PC-9 (cell line): ENCODE measurements at regions of chr15 and their contacts with region 1.

Region 1: GRCh38 chr15:81000624-81001151 is at the start of gene TLNRD1:
- DNase-seq: peak; percentile 75 to 86
- H3K4me3 ChIP-seq: peak within 1 kb of the TSS; percentile 76
- H3K27ac ChIP-seq: peak within 1 kb of the TSS; percentile 83
- H3K4me1 ChIP-seq: peaks cover 18% of the 10 kb centered on the region
- H3K27me3 ChIP-seq: no peaks in the 10 kb centered on the region
- CTCF ChIP-seq: no peak
- total RNA-seq, gene TLNRD1: 14.9 and 18.2 TPM in 2 replicates

Region 2: DNA sequence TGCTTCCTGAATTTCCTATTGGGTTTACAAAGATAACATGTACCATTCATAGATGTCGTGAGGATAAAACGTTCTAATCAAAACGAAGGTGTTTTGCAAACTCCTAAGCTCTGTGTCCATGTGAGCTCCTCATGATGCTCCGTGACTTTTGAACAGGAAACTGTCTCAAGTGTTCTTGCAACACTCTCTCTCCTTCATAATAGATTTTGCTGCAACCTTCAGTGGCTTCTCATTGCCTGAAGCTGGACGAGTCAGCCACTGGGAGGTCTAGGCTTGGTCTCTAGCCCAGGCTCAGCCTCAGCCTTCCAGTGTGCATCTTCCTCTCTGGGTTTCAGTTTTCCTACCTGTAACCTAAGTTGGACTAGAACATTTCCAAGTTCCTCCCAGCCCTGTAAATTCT is 1011.0 kb before region 1 on chr15:
- CTCF ChIA-PET with region 1: interaction called, 12 read pairs
- POLR2A ChIA-PET with region 1: no interaction called
- intact Hi-C with region 1: no loop called
- DNase-seq: peak in 1 of 2 experiments; percentile 48
- H3K4me3 ChIP-seq: no peak overlapping the region
- H3K27ac ChIP-seq: no peak overlapping the region
- H3K4me1 ChIP-seq: peaks cover 20% of the 10 kb centered on the region
- H3K27me3 ChIP-seq: no peaks in the 10 kb centered on the region
- CTCF ChIP-seq: no peak

Region 3: GRCh38 chr15:80323285-80323684 is 677.4 kb before region 1 on chr15:
- CTCF ChIA-PET with region 1: no interaction called
- POLR2A ChIA-PET with region 1: no interaction called
- intact Hi-C with region 1: no loop called
- DNase-seq: no peak
- H3K4me3 ChIP-seq: no peak overlapping the region
- H3K27ac ChIP-seq: no peak overlapping the region
- H3K4me1 ChIP-seq: no peaks in the 10 kb centered on the region
- H3K27me3 ChIP-seq: no peaks in the 10 kb centered on the region
- CTCF ChIP-seq: peak; percentile 63

Region 4: DNA sequence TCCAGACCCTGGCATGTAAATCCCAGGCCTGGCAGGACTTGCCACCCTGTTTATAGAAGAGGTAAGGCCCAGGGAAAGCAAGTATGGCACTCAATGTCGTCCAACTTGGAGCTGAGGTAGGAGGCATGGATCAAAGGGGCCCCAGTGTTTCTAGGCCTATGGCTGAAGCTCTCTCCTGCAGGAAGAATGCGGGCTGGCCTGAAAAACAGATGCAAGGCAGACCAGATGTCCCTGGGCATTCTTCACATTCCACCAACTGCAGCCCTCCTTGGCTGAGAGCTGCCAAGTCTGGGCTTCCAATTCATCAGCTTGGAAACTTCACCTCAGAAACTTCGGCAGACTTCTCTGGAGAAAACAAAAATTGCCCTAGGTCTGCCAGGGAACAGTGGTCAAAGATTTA is 33.2 kb before region 1 on chr15:
- CTCF ChIA-PET with region 1: no interaction called
- POLR2A ChIA-PET with region 1: no interaction called
- intact Hi-C with region 1: no loop called
- DNase-seq: peak; percentile 71 to 73
- H3K4me3 ChIP-seq: no peak overlapping the region
- H3K27ac ChIP-seq: no peak overlapping the region
- H3K4me1 ChIP-seq: peaks cover 32% of the 10 kb centered on the region
- H3K27me3 ChIP-seq: no peaks in the 10 kb centered on the region
- CTCF ChIP-seq: no peak

Region 5: GRCh38 chr15:80989518-80990478 is 10.9 kb before region 1 on chr15 and contains the start of gene MESD:
- CTCF ChIA-PET with region 1: no interaction called
- POLR2A ChIA-PET with region 1: no interaction called
- intact Hi-C with region 1: loop called (anchors 1 kb)
- DNase-seq: peak; percentile 74 to 92
- H3K4me3 ChIP-seq: peak within 1 kb of the TSS; percentile 87
- H3K27ac ChIP-seq: peak within 1 kb of the TSS; percentile 58
- H3K4me1 ChIP-seq: peaks cover 24% of the 10 kb centered on the region
- H3K27me3 ChIP-seq: no peaks in the 10 kb centered on the region
- CTCF ChIP-seq: no peak
- total RNA-seq, gene MESD: 21.9 and 22.8 TPM in 2 replicates

Region 6: GRCh38 chr15:81015621-81016488 is 15.2 kb after region 1 on chr15:
- CTCF ChIA-PET with region 1: no interaction called
- POLR2A ChIA-PET with region 1: no interaction called
- intact Hi-C with region 1: no loop called
- DNase-seq: no peak
- H3K4me3 ChIP-seq: no peak overlapping the region
- H3K27ac ChIP-seq: no peak overlapping the region
- H3K4me1 ChIP-seq: no peaks in the 10 kb centered on the region
- H3K27me3 ChIP-seq: no peaks in the 10 kb centered on the region
- CTCF ChIP-seq: no peak

Region 7: DNA sequence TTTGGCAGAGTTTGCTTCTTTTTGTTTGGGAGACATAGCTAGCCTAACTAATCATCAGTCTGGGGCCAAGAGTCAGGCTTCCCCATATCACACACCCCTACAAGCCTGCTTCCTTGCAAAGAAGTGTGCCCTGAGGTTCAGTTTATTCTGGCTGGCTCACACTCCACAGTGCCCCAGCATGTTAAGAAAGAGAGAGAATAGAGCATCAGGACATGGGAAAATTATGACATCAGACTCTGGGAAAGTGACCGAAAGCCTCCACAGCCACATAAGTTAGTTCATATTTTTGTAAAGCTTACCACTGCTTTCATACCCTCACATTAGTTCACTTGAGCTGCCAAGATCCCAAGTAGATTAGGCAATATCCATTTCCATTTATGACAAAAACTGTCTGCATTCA is 70.4 kb after region 1 on chr15:
- CTCF ChIA-PET with region 1: no interaction called
- POLR2A ChIA-PET with region 1: no interaction called
- intact Hi-C with region 1: no loop called
- DNase-seq: no peak
- H3K4me3 ChIP-seq: no peak overlapping the region
- H3K27ac ChIP-seq: no peak overlapping the region
- H3K4me1 ChIP-seq: peaks cover 10% of the 10 kb centered on the region
- H3K27me3 ChIP-seq: no peaks in the 10 kb centered on the region
- CTCF ChIP-seq: no peak

Region 8: GRCh38 chr15:81106560-81106959 is 105.9 kb after region 1 on chr15:
- CTCF ChIA-PET with region 1: no interaction called
- POLR2A ChIA-PET with region 1: no interaction called
- intact Hi-C with region 1: loop called (anchors 5 kb)
- DNase-seq: peak; percentile 48
- H3K4me3 ChIP-seq: no peak overlapping the region
- H3K27ac ChIP-seq: no peak overlapping the region
- H3K4me1 ChIP-seq: no peaks in the 10 kb centered on the region
- H3K27me3 ChIP-seq: peaks cover 17% of the 10 kb centered on the region; the same call in 1 of the 2 replicates
- CTCF ChIP-seq: peak; percentile 78

Region 9: DNA sequence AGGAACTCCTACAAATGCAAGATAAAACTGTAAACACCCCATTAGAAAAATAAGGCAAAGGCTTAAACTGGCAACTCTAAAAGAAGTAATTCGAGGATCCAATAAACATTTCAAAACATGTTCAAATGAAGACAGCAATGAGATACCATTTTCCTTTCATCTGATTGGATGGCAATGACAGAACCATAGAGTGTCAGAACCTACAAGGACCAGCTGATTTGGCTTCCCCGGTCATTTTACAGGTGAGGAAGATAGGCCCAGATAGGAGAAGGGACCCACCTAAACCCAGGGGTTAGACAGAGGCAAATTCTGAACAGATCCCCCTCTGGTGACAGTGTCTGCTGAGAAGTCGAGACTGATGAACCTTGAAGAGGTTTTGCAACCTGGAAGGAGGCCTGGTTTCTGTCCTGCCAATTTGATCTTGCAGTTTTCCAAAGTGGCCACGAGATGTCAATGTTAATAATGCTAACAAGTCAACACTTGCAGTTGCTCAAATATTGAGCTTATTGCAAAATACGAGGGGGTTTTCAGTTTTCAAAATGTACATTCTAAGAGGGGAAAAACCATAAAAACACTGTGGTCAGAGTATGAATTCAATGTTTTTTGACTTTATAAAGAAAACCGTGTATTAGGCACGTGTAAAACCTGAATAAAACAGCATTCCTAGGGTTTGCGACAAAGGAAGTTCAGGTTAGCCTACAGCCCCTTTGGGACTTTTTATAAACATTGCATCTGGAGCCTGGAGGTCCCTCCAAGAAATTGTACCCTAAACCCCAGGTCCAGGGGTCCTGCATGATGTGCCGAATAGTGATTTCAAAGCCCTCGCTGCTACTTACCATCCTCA is 154.9 kb after region 1 on chr15:
- CTCF ChIA-PET with region 1: interaction called, 17 read pairs
- POLR2A ChIA-PET with region 1: no interaction called
- intact Hi-C with region 1: no loop called
- DNase-seq: no peak
- H3K4me3 ChIP-seq: no peak overlapping the region
- H3K27ac ChIP-seq: no peak overlapping the region
- H3K4me1 ChIP-seq: no peaks in the 10 kb centered on the region
- H3K27me3 ChIP-seq: peaks cover 25% of the 10 kb centered on the region
- CTCF ChIP-seq: peak; percentile 60

Region 10: GRCh38 chr15:81265944-81266775 is 265.5 kb after region 1 on chr15:
- CTCF ChIA-PET with region 1: no interaction called
- POLR2A ChIA-PET with region 1: no interaction called
- intact Hi-C with region 1: loop called (anchors 5 kb)
- DNase-seq: peak; percentile 52 to 59
- H3K4me3 ChIP-seq: no peak overlapping the region
- H3K27ac ChIP-seq: no peak overlapping the region
- H3K4me1 ChIP-seq: no peaks in the 10 kb centered on the region
- H3K27me3 ChIP-seq: peaks cover 68% of the 10 kb centered on the region
- CTCF ChIP-seq: peak; percentile 81

Region 11: DNA sequence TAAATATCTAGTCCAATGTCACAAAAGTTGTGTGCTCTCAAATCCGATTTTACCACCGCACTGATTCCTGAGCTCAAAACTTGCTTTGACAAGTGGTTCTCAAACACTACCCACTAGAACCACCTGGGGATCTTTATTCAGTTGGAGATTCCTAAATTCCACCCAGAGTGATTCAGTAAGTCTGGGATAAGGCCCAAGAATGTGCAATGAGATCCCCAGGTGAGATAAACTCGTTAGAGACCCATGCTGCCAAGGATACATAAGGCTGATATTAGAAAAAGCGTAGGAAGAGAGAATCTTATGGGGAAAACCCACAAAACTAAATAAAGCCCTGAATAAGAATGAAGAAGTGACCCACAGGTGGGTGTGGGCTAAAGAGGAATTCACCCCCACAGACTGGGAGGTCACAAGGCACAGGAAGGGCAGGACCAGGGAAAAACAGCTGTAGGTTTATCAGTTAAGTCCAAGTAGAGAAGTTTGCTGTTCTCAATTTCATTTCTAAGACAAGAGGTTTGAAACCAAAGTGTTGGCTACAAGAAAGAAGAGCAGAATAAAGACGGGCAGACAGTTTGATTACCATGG is 1551.1 kb after region 1 on chr15:
- CTCF ChIA-PET with region 1: interaction called, 12 read pairs
- POLR2A ChIA-PET with region 1: no interaction called
- intact Hi-C with region 1: no loop called
- DNase-seq: peak; percentile 41 to 68
- H3K4me3 ChIP-seq: no peak overlapping the region
- H3K27ac ChIP-seq: no peak overlapping the region
- H3K4me1 ChIP-seq: no peaks in the 10 kb centered on the region
- H3K27me3 ChIP-seq: peaks cover 27% of the 10 kb centered on the region; the same call in 1 of the 2 replicates
- CTCF ChIP-seq: no peak